ENCODE measurements at regions of chr17 and their contacts with region 1.

Region 1: GRCh38 chr17:48024937-48025906 is 12.4 kb downstream of the COPZ2 start:
- DNase-seq: peak; percentile 98
- H3K4me3 Mint-ChIP-seq: peak overlapping the region; percentile 86
- H3K27ac Mint-ChIP-seq: peak overlapping the region; percentile 91
- H3K4me1 Mint-ChIP-seq: peaks cover 38% of the 10 kb centered on the region
- H3K27me3 Mint-ChIP-seq: peaks cover 20% of the 10 kb centered on the region

Region 2: DNA sequence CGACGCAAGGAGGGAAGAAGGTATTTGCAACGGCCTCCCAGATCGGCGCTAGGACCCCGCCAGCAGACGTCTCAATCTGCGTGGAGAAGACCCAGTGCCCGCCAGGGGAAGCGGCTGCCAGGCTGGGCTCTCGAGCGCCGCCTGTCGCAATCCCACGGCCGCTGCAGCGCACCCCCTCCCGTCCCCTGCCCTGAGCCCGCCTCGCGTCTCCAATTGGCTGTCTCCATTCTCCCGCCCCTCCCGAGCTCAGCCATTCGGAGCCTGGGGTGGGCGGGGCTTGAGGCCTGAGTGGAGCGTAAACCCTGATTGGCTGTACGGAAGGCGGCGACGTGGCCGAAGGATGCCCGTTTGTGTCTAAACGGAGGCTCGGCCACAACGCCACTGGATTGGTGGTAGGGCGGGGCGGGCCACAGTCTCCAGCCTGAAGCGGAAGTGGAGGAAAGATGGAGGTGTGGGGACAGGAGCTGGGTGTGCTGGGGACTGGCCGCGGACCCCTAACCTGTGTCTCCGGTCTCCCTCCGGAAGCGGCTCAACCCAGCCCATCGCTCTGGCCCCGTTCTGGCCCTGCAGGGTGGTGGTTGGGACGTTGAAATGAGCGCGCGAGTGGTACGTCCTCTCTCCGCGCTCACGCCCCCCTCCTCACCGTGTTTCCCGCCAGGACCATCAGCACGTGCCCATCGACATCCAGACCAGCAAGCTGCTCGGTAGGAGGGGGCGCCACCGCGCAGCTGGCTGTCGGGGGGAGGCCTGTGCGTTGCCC is 54.3 kb before region 1 on chr17 and contains the start of gene CDK5RAP3:
- CTCF ChIA-PET with region 1: interaction called, 185 read pairs
- POLR2A ChIA-PET with region 1: no interaction called
- DNase-seq: peak; percentile 100
- H3K4me3 Mint-ChIP-seq: peak within 1 kb of the TSS; percentile 91
- H3K27ac Mint-ChIP-seq: peak within 1 kb of the TSS; percentile 64
- H3K4me1 Mint-ChIP-seq: peaks cover 28% of the 10 kb centered on the region
- H3K27me3 Mint-ChIP-seq: no peaks in the 10 kb centered on the region
- total RNA-seq, gene CDK5RAP3: 194 to 205 TPM

Region 3: DNA sequence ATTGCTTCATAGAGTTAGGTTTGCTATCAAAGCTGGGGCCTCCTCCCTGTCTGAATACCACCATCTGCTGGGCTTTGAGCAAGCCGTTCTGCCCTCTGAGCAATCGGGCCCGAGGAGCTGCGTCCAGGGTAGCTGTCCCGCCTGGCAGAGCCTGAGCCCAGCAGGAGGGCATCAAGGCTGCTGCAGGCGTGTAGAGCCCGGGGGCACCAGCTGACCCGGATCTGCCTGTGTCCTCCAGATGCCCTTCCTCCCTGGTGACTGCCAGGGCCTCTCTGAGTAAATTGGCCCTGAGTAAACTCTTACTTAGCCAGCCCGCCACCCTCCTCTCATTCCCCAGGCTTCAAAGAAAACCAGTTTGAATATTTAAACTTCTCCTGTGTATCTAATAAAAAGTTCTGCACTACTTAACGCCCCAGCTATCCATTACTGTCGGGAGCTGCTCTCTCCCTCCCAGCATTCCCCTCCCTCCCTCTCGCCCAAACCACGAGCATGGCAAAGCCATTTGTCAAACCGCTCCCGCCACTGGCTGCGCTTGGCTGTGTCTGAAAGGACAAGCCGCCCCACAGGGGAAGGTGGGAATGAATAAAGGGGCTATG is 37.9 kb before region 1 on chr17:
- CTCF ChIA-PET with region 1: no interaction called
- POLR2A ChIA-PET with region 1: no interaction called
- DNase-seq: no peak
- H3K4me3 Mint-ChIP-seq: no peak overlapping the region
- H3K27ac Mint-ChIP-seq: no peak overlapping the region
- H3K4me1 Mint-ChIP-seq: peaks cover 25% of the 10 kb centered on the region
- H3K27me3 Mint-ChIP-seq: peaks cover 4% of the 10 kb centered on the region

Region 4: GRCh38 chr17:48037036-48037837 is 12.0 kb after region 1 on chr17 and contains the start of gene COPZ2:
- CTCF ChIA-PET with region 1: interaction called, 46 read pairs
- POLR2A ChIA-PET with region 1: interaction called, 3 read pairs
- DNase-seq: peak; percentile 75
- H3K4me3 Mint-ChIP-seq: peak within 1 kb of the TSS; percentile 79
- H3K27ac Mint-ChIP-seq: peak within 1 kb of the TSS; percentile 30
- H3K4me1 Mint-ChIP-seq: peaks cover 12% of the 10 kb centered on the region
- H3K27me3 Mint-ChIP-seq: peaks cover 40% of the 10 kb centered on the region
- total RNA-seq, gene COPZ2: 7.4 to 11.5 TPM

Region 5: GRCh38 chr17:48068491-48068961 is 43.3 kb after region 1 on chr17:
- CTCF ChIA-PET with region 1: interaction called, 94 read pairs
- POLR2A ChIA-PET with region 1: interaction called, 5 read pairs
- DNase-seq: no peak
- H3K4me3 Mint-ChIP-seq: no peak overlapping the region
- H3K27ac Mint-ChIP-seq: no peak overlapping the region
- H3K4me1 Mint-ChIP-seq: no peaks in the 10 kb centered on the region
- H3K27me3 Mint-ChIP-seq: no peaks in the 10 kb centered on the region

Region 6: GRCh38 chr17:48084932-48085444 is 59.8 kb after region 1 on chr17:
- CTCF ChIA-PET with region 1: interaction called, 44 read pairs
- POLR2A ChIA-PET with region 1: interaction called, 3 read pairs
- DNase-seq: no peak
- H3K4me3 Mint-ChIP-seq: no peak overlapping the region
- H3K27ac Mint-ChIP-seq: no peak overlapping the region
- H3K4me1 Mint-ChIP-seq: peaks cover 8% of the 10 kb centered on the region
- H3K27me3 Mint-ChIP-seq: no peaks in the 10 kb centered on the region

Region 7: DNA sequence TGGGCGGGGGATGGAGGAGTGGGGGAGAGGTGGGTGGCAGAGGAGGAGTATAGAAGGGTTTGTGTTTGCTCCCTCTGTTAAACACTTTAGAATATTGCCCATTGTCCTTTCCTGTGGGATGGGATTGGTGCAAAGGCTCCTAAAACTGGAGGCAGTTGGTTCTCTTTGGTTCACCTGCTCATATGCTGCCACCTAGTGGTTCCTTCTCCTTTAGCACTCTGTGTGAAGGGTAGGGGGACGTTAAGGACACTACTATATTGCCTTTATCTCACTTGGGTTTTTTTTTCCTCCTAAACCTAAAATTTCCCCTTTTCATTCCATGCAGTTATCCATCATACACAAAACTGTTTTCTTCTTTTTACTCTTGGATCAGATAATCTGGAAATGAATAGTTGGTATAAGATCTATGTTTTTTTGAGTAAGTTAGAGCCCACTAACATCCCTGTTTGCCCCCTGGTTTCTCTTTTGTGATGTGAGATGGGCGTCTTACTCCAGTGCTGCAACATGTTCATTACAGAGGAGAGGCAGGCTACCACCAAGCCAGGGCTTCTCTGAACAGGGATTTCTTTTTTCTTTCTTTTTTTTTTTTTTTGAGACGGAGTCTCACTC is 106.1 kb after region 1 on chr17:
- CTCF ChIA-PET with region 1: interaction called, 15 read pairs
- POLR2A ChIA-PET with region 1: interaction called, 3 read pairs
- DNase-seq: peak; percentile 41
- H3K4me3 Mint-ChIP-seq: no peak overlapping the region
- H3K27ac Mint-ChIP-seq: no peak overlapping the region
- H3K4me1 Mint-ChIP-seq: no peaks in the 10 kb centered on the region
- H3K27me3 Mint-ChIP-seq: no peaks in the 10 kb centered on the region